Ascending aorta (tissue), 2 donors: ENCODE measurements at regions of chrX and their contacts with region 1.

Region 1: DNA sequence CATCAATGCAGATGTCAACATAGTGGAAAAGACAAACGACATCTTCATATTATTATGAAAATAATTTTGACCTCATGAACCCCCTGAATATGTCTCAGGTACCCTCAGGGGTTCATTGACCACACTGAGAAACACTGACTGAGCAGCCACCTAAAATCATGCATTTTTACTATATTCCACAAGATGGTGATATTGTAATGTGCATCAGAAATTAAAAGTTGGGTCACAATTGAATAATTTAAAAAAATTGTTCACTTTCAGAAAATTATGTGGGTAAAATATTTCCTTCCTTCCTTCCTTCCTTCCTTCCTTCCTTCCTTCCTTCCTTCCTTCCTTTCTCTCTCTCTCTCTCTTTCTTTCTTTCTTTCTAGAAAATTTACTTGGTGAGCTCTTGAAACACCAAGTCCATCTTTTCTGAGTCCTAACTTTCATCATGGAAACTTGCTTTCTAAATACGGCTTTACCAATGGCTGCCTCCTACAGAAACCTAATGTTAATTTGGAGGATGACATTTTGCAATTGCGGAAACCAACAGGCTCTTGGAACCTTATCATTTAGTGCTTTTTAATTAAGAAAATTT is 103.6 kb downstream of the RTL3 start:
- DNase-seq: no peak
- H3K4me3 ChIP-seq: no peak overlapping the region
- H3K27ac ChIP-seq: no peak overlapping the region
- H3K4me1 ChIP-seq: no peaks in the 10 kb centered on the region
- H3K27me3 ChIP-seq: no peaks in the 10 kb centered on the region
- CTCF ChIP-seq: peak; percentile 9 to 53 (median 22)

Region 2: DNA sequence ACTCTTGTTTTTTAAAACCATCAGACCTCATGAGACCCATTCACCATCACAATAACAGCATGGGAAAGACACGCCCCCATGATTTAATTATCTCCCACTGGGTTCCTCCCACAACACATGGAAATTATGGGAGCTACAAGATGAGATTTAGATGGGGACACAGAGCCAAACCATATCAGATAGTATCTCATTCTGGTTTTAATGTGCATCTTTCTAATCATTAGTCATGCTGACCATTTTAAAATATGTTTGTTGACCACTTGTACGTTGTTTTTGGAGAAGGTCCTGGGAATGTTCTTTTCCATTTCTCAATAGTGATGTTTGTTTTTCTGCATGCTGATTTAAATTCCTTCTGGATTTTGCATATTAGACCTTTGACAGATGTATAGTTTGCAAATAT is 15.3 kb before region 1 on chrX:
- intact Hi-C with region 1: no loop called
- DNase-seq: no peak
- H3K4me3 ChIP-seq: no peak overlapping the region
- H3K27ac ChIP-seq: no peak overlapping the region
- H3K4me1 ChIP-seq: no peaks in the 10 kb centered on the region
- H3K27me3 ChIP-seq: no peaks in the 10 kb centered on the region
- CTCF ChIP-seq: no peak

Region 3: GRCh38 chrX:78886550-78886949 is 331.1 kb after region 1 on chrX:
- intact Hi-C with region 1: loop called (anchors 10 kb)
- DNase-seq: no peak
- H3K4me3 ChIP-seq: no peak overlapping the region
- H3K27ac ChIP-seq: no peak overlapping the region
- H3K4me1 ChIP-seq: no peaks in the 10 kb centered on the region
- H3K27me3 ChIP-seq: no peaks in the 10 kb centered on the region
- CTCF ChIP-seq: peak in 2 of 3 experiments; percentile 12 to 27

Region 4: DNA sequence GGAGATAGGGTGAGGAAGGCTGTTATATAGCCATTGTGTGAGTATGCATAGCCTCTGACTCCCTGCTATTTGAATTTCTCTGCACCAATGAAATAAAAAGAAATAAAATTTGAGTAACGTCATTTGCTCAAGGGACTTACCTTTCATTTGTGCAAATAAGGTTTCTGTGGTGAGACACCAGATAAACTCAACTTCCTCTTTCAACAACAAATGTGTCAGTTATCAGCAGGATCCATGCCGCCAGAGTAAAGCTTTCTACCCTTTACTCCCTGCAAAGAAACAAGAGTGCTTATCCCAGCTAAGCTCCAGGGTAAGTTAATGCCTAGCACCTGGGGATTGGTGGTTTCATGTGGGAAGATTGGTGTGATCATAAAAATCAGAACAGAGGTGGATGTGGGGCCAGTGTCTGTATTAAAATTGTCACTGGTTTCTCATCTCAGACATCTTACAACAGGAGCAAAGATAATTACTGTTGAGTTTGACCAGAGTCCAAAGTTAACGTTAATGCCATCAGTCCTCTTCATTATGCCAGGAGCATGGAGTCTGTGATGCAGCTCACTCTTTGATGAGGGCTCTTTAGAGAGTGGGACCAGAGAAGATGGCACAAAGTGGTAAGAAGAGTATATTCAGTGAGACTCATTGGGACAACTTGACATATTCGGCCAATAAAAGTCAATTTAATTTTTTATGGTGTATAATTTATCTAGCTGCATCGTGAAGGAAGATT is 389.9 kb after region 1 on chrX and contains the start of gene P2RY10:
- intact Hi-C with region 1: no loop called
- DNase-seq: no peak
- H3K4me3 ChIP-seq: no peak within 1 kb of the TSS
- H3K27ac ChIP-seq: no peak within 1 kb of the TSS
- H3K4me1 ChIP-seq: no peaks in the 10 kb centered on the region
- H3K27me3 ChIP-seq: no peaks in the 10 kb centered on the region
- CTCF ChIP-seq: no peak
- total RNA-seq, gene P2RY10: not detected

Region 5: DNA sequence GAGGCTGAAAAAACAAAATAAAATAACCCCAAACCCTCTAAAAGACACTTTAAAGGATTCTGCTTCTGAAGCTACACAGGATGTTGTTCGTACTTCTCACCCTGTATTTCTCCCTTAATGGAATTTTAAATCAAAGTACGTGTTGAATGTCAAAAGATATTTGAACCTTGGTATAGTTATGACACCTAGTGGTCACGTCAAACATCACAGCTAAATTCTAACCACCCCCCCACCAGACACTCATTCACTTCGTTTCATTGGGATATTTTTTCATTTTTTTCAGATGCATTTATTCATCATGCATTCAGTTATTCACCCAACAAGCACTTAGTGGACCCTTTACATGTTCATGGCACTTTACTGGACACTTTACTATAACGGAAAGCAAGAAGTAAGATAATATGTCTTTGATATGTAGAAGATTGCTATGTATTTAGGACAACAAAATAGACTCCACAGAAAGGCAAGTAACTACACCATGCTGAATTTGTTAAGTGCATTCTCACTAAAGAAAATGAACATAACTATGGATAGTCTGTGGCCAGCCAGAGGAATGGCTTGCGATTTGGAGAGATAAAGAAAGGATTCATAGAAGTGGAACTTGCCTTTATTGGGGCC is 526.5 kb after region 1 on chrX:
- intact Hi-C with region 1: loop called (anchors 5 kb)
- DNase-seq: no peak
- H3K4me3 ChIP-seq: no peak overlapping the region
- H3K27ac ChIP-seq: no peak overlapping the region
- H3K4me1 ChIP-seq: no peaks in the 10 kb centered on the region
- H3K27me3 ChIP-seq: no peaks in the 10 kb centered on the region
- CTCF ChIP-seq: peak; percentile 23 to 62 (median 59)